Mammary epithelial cell (primary cell): ENCODE measurements at regions of chr19 and their contacts with region 1.

Region 1: GRCh38 chr19:29761575-29762232 is 46.6 kb upstream of the C19orf12 start:
- DNase-seq: no peak
- H3K4me3 ChIP-seq: no peak overlapping the region
- H3K27ac ChIP-seq: no peak overlapping the region
- H3K4me1 ChIP-seq: no peaks in the 10 kb centered on the region
- H3K27me3 ChIP-seq: no peaks in the 10 kb centered on the region
- CTCF ChIP-seq: no peak

Region 2: DNA sequence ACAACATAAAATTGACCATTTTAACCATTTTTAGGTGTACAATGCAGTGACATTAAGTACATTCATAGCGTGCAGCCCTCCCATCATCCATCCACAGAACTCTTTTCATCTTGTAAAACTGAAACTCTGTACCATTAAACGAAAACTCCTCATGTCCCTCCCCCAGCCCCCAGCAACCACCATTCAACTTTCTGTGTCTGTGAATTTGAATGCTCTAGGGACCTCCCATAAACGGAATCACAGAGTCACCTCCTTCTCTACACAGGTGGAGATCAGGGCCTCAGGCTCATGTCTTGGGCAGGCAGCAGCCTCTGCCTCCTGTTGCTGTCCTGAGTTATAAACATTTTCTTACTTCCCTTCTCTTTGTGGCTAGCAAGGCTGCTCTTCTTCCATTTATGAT is 42.8 kb after region 1 on chr19:
- CTCF ChIA-PET with region 1: no interaction called
- dilution Hi-C with region 1: loop called (anchors 5 kb)
- in situ Hi-C with region 1: no loop called
- intact Hi-C with region 1: no loop called
- DNase-seq: no peak
- H3K4me3 ChIP-seq: no peak overlapping the region
- H3K27ac ChIP-seq: no peak overlapping the region
- H3K4me1 ChIP-seq: no peaks in the 10 kb centered on the region
- H3K27me3 ChIP-seq: no peaks in the 10 kb centered on the region
- CTCF ChIP-seq: no peak

Region 3: DNA sequence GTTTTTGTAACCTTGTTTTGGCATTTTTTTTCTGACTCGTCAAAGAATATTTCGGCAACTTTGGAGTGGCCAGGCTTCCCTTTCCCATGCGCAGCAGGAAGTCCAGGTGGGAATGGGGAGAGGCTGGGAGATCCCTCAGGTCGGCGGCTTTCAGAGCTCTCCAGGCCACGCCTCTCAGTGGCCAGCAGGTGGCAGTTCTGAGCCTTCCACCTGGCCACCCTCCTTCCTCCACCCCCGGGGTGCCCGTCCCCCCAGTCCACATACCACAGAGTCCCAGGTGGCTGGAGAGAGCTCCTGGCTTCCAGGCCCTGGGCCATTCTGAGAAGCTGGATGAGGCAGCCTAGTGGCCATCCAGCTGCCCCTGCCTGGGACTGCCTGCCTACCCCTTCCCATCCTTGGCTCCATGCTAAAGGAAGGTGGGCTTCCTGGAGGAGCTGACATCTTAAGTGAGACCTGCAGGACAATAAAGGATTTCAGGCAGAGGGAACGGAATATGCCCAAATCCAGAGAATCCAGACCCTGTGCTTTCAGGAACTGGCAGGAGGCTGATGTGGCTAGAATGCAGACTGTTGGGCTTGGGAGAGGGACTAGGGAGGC is 96.4 kb after region 1 on chr19:
- CTCF ChIA-PET with region 1: no interaction called
- dilution Hi-C with region 1: loop called (anchors 5 kb)
- in situ Hi-C with region 1: loop called in 1 of 2 experiments (anchors 25 kb)
- intact Hi-C with region 1: no loop called
- DNase-seq: no peak
- H3K4me3 ChIP-seq: no peak overlapping the region
- H3K27ac ChIP-seq: no peak overlapping the region
- H3K4me1 ChIP-seq: no peaks in the 10 kb centered on the region
- H3K27me3 ChIP-seq: no peaks in the 10 kb centered on the region
- CTCF ChIP-seq: peak; percentile 59 to 83

Region 4: GRCh38 chr19:29873024-29873800 is 111.5 kb after region 1 on chr19:
- CTCF ChIA-PET with region 1: no interaction called
- dilution Hi-C with region 1: no loop called
- in situ Hi-C with region 1: loop called in 1 of 2 experiments (anchors 25 kb)
- intact Hi-C with region 1: loop called (anchors 1 kb)
- DNase-seq: no peak
- H3K4me3 ChIP-seq: peak overlapping the region; percentile 28 to 46 (median 33)
- H3K27ac ChIP-seq: no peak overlapping the region
- H3K4me1 ChIP-seq: peaks cover 11% of the 10 kb centered on the region
- H3K27me3 ChIP-seq: no peaks in the 10 kb centered on the region
- CTCF ChIP-seq: peak; percentile 33 to 66